ENCODE measurements at regions of chr5 and their contacts with region 1.

Region 1: DNA sequence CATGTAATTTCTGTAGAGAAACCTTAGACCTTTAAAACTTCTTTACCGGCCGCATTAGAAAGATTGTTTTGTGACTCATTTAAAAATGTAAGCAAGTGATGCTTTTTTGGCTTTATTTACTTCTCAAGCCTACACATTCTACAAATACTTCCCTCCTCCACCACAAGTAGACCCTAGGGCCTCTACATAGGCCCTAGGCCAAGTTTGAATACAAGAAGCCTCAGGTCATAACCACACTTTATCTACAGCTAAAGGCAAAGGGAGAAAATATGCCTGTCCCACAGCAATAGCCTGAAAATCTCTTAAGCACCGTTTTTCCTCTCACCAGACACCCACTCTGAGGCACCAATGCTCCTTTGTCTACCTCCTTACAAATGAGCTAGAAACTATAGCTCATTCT is 53.9 kb downstream of the CSNK1A1 start:
- DNase-seq: peak; percentile 91
- H3K4me3 ChIP-seq: no peak overlapping the region
- H3K27ac ChIP-seq: peak overlapping the region; percentile 85
- H3K27me3 ChIP-seq: no peaks in the 10 kb centered on the region
- CTCF ChIP-seq: no peak; the same call in 1 of the 2 replicates

Region 2: DNA sequence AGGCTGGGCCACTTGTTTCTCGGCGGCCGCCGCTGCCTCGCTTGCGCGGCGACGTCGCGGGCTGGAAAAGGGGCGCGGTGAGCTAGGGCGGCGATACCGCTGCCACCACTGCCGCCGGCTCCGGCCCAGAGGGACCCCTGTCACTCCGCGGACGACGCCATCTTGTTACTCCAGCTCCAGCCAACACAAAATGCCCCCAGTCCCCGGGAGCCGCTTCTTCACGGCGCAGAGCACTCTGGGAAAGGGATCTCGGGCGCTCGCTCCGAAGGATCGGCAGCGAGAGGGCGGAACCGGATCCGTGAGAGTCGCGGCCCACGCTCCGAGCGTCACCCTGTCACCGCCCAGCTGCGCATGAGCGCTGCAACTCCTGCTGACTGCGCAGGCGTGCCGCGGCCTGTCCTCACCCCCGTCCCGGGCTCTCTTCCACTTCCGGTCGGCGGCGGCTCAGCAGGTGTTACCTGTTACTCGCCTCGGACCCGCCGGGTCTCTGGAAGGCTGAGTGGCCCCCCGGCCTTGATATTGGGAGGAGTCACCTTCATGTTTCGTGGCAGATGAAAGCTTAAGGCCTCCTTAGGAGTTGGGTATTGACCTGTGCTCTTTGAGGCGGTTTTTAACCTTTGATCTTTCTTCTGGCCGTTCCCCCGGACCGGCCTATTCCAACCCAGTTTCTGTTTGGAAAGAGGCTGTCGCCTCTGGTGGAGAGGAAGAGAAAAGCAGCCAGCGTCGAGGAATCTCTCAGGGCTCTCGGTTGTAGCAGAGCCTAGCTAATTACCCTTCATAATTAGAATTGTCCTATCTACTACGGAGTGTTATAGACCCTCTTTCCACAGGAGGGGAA is 54.1 kb after region 1 on chr5 and contains the start of gene CSNK1A1:
- CTCF ChIA-PET with region 1: interaction called, 3 read pairs
- POLR2A ChIA-PET with region 1: interaction called, 10 read pairs
- DNase-seq: peak; percentile 97
- H3K4me3 ChIP-seq: peak within 1 kb of the TSS; percentile 96
- H3K27ac ChIP-seq: peak within 1 kb of the TSS; percentile 91
- H3K27me3 ChIP-seq: no peaks in the 10 kb centered on the region
- CTCF ChIP-seq: peak; percentile 86
- polyA plus RNA-seq, gene CSNK1A1: 260 and 329 TPM in 2 replicates

Region 3: DNA sequence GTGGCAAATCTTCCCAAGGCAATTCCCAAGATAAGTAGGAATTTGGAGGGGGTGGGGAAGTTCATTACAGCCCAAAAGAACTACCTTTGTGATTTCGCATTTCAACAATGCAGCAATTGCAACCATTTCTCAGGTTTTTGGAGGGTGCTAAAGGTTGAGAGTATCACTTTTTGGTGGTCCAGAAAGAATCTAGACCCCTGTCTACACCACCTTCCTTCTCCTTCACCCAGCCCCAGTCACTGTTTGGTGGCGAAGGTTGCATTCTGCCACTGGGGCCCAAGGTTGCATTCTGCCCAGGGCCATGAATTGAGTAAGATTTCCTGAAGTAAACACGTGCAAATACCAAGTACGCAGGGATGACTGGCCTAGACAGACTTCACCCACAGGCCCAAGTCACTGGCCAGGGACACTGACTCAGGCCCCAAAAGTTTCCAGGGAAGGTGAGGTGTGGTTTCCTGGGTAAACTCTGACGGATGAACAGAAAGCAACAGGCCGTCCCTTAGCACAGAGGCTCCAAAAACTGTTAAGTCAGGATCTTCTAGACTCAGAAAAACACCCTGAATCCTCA is 441.5 kb after region 1 on chr5:
- CTCF ChIA-PET with region 1: no interaction called
- POLR2A ChIA-PET with region 1: no interaction called
- DNase-seq: no peak
- H3K4me3 ChIP-seq: no peak overlapping the region
- H3K27ac ChIP-seq: peak overlapping the region; percentile 12
- H3K27me3 ChIP-seq: no peaks in the 10 kb centered on the region
- CTCF ChIP-seq: no peak